HEK293 (cell line): ENCODE measurements at regions of chr15 and their contacts with region 1.

Region 1: DNA sequence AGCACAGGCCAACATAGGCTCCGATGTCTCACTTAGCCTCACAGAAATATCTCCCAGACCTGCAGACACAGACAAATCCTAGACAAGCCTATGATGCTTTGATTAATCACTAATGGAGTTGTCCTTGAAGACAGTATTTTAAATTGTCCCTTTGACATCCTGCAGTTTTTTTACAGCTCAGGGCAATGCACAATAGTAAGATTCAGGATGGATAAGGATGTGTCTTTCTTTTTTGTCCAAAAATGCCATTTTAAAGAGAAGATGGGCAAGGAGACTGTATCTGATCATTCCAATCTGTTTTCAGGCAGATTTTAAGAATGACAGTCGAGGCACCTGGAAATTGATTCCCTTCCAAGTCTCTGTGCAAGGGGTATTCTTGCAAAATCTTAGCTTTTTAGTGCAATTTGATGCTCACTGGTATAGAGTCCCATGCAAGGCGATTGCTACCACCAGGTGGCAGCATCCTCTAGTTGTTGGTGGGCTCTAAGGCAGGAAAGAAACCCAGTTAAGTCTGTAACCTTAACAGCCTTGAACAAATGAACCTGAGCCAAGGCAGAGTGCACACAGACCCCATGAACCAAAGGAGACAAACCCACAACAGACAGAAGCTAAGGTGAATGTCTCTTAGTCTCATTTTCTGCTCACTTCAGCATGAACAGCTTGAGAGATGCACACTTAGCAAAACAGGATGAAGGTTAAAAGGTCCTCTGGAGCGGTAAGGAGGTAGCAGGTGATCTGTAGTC is 51.2 kb upstream of the MINAR1 start:
- H3K4me3 ChIP-seq: no peak overlapping the region
- H3K27ac ChIP-seq: no peak overlapping the region
- H3K4me1 ChIP-seq: no peaks in the 10 kb centered on the region
- CTCF ChIP-seq: peak; percentile 47

Region 2: GRCh38 chr15:79322945-79323344 is 58.0 kb before region 1 on chr15:
- CTCF ChIA-PET with region 1: no interaction called
- POLR2A ChIA-PET with region 1: no interaction called
- H3K4me3 ChIP-seq: no peak overlapping the region
- H3K27ac ChIP-seq: no peak overlapping the region
- H3K4me1 ChIP-seq: no peaks in the 10 kb centered on the region
- CTCF ChIP-seq: no peak

Region 3: DNA sequence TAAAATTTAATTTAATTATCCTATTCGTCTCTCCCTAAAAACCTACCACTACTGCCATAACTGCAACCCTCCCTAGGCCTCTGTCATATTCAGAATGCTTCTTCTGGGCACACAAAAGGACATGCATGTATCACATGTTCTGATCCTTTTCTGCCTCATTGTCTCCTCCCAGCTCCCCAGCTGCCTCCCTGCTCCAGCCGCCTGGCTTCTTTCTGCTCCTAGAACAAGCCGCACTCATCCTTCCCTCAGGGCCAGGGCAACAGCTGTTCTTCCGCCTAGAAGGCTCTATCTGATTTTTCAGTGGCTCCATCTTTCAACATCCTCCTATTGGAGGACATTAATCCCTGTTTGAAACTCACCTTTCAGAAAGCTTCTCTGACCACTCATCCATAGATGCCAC is 31.4 kb before region 1 on chr15:
- CTCF ChIA-PET with region 1: interaction called, 18 read pairs
- POLR2A ChIA-PET with region 1: no interaction called
- H3K4me3 ChIP-seq: no peak overlapping the region
- H3K27ac ChIP-seq: no peak overlapping the region
- H3K4me1 ChIP-seq: no peaks in the 10 kb centered on the region
- CTCF ChIP-seq: no peak

Region 4: GRCh38 chr15:79364571-79365240 is 16.2 kb before region 1 on chr15:
- CTCF ChIA-PET with region 1: interaction called, 63 read pairs
- POLR2A ChIA-PET with region 1: no interaction called
- H3K4me3 ChIP-seq: no peak overlapping the region
- H3K27ac ChIP-seq: no peak overlapping the region
- H3K4me1 ChIP-seq: no peaks in the 10 kb centered on the region
- CTCF ChIP-seq: no peak

Region 5: GRCh38 chr15:79418693-79419279 is 37.9 kb after region 1 on chr15:
- CTCF ChIA-PET with region 1: interaction called, 13 read pairs
- POLR2A ChIA-PET with region 1: no interaction called
- H3K4me3 ChIP-seq: no peak overlapping the region
- H3K27ac ChIP-seq: no peak overlapping the region
- H3K4me1 ChIP-seq: no peaks in the 10 kb centered on the region
- CTCF ChIP-seq: no peak

Region 6: DNA sequence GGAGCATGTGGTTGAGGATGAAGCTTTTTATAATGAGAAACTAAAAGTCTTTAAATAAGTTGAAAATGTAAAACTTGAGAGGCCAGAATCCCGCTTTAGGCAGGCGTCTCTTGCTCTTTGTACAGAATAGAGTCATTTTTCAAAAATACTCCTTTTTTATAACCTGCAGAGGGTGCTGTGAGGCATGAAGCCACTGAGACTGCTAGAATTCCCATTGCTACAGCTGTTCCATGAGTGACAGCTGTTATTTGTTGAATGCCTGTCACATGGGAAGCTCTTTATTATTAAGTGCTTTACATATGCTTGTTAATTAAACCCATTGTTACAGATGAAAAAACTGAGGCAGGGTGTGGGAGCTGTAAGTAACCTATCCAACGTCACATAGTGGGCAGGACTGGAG is 69.7 kb after region 1 on chr15:
- CTCF ChIA-PET with region 1: interaction called, 25 read pairs
- POLR2A ChIA-PET with region 1: no interaction called
- H3K4me3 ChIP-seq: no peak overlapping the region
- H3K27ac ChIP-seq: no peak overlapping the region
- H3K4me1 ChIP-seq: no peaks in the 10 kb centered on the region
- CTCF ChIP-seq: no peak

Region 7: GRCh38 chr15:79608066-79608864 is 227.3 kb after region 1 on chr15:
- CTCF ChIA-PET with region 1: interaction called, 12 read pairs
- POLR2A ChIA-PET with region 1: no interaction called
- H3K4me3 ChIP-seq: no peak overlapping the region
- H3K27ac ChIP-seq: no peak overlapping the region
- H3K4me1 ChIP-seq: no peaks in the 10 kb centered on the region
- CTCF ChIP-seq: no peak

Region 8: DNA sequence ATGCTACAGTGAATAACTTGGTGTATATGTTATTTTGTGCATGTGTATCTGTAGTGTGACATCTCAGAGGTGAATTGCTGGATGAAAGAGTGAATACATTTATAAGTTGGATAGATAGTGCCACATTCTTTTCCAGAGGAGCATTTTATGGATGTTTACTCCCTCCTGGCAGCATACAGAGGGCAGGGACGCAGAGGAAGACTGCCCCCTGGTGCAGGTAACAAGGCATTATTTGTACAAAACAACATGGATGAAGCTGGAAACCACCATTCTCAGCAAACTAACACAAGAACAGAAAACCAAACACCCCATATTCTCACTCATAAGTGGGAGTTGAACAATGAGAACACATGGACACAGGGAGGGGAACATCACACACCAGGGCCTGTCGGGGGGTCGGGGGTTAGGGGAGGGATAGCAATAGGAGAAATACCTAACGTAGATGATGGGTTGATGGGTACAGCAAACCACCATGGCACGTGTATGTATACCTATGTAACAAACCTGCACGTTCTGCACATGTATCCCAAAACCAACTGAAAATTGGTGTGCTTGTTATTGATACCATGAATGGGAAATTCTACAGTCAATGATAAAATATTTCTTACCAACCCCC is 929.0 kb after region 1 on chr15:
- CTCF ChIA-PET with region 1: interaction called, 11 read pairs
- POLR2A ChIA-PET with region 1: no interaction called
- H3K4me3 ChIP-seq: no peak overlapping the region
- H3K27ac ChIP-seq: no peak overlapping the region
- H3K4me1 ChIP-seq: no peaks in the 10 kb centered on the region
- CTCF ChIP-seq: peak; percentile 54; the same call in 1 of the 2 replicates